Transverse colon (tissue), 4 donors: ENCODE measurements at regions of chr14 and their contacts with region 1.

Region 1: GRCh38 chr14:98536256-98536655 is 735.7 kb downstream of the BCL11B start:
- DNase-seq: no peak
- H3K4me3 ChIP-seq: no peak overlapping the region
- H3K27ac ChIP-seq: no peak overlapping the region
- H3K4me1 ChIP-seq: no peaks in the 10 kb centered on the region
- H3K27me3 ChIP-seq: no peaks in the 10 kb centered on the region
- CTCF ChIP-seq: no peak
- EP300 ChIP-seq: no peak
- POLR2A ChIP-seq: no peak

Region 2: GRCh38 chr14:97290977-97291376 is 1245.3 kb before region 1 on chr14:
- in situ Hi-C with region 1: no loop called
- intact Hi-C with region 1: loop called (anchors 5 kb)
- DNase-seq: no peak
- H3K4me3 ChIP-seq: no peak overlapping the region
- H3K27ac ChIP-seq: no peak overlapping the region
- H3K4me1 ChIP-seq: no peaks in the 10 kb centered on the region
- H3K27me3 ChIP-seq: peaks cover 14% of the 10 kb centered on the region
- CTCF ChIP-seq: no peak
- EP300 ChIP-seq: no peak
- POLR2A ChIP-seq: no peak

Region 3: GRCh38 chr14:97564334-97564733 is 971.9 kb before region 1 on chr14:
- in situ Hi-C with region 1: no loop called
- intact Hi-C with region 1: no loop called
- DNase-seq: no peak
- H3K4me3 ChIP-seq: no peak overlapping the region
- H3K27ac ChIP-seq: no peak overlapping the region
- H3K4me1 ChIP-seq: no peaks in the 10 kb centered on the region
- H3K27me3 ChIP-seq: no peaks in the 10 kb centered on the region
- CTCF ChIP-seq: no peak
- EP300 ChIP-seq: no peak
- POLR2A ChIP-seq: no peak